ENCODE measurements at regions of chr10 and their contacts with region 1.

Region 1: GRCh38 chr10:110059925-110060324 is 52.1 kb downstream of the ADD3 start:
- DNase-seq: no peak
- H3K4me3 ChIP-seq: no peak overlapping the region
- H3K27ac ChIP-seq: no peak overlapping the region
- H3K4me1 ChIP-seq: peaks cover 12% of the 10 kb centered on the region
- H3K27me3 ChIP-seq: no peaks in the 10 kb centered on the region
- CTCF ChIP-seq: no peak
- EP300 ChIP-seq: no peak
- POLR2A ChIP-seq: no peak

Region 2: GRCh38 chr10:110039254-110039653 is 20.7 kb before region 1 on chr10:
- intact Hi-C with region 1: loop called in 1 of 4 experiments (anchors 2 kb)
- DNase-seq: no peak
- H3K4me3 ChIP-seq: no peak overlapping the region
- H3K27ac ChIP-seq: no peak overlapping the region
- H3K4me1 ChIP-seq: no peaks in the 10 kb centered on the region
- H3K27me3 ChIP-seq: no peaks in the 10 kb centered on the region
- CTCF ChIP-seq: no peak
- EP300 ChIP-seq: no peak
- POLR2A ChIP-seq: no peak

Region 3: GRCh38 chr10:110820321-110820814 is 760.4 kb after region 1 on chr10:
- intact Hi-C with region 1: no loop called
- DNase-seq: peak; percentile 60 to 72 (median 66)
- H3K4me3 ChIP-seq: no peak overlapping the region
- H3K27ac ChIP-seq: peak overlapping the region; percentile 78 to 83
- H3K4me1 ChIP-seq: peaks cover 35% of the 10 kb centered on the region
- H3K27me3 ChIP-seq: no peaks in the 10 kb centered on the region
- CTCF ChIP-seq: no peak
- EP300 ChIP-seq: no peak
- POLR2A ChIP-seq: no peak